Endothelial cell of umbilical vein (primary cell): ENCODE measurements at regions of chr6 and their contacts with region 1.

Region 1: DNA sequence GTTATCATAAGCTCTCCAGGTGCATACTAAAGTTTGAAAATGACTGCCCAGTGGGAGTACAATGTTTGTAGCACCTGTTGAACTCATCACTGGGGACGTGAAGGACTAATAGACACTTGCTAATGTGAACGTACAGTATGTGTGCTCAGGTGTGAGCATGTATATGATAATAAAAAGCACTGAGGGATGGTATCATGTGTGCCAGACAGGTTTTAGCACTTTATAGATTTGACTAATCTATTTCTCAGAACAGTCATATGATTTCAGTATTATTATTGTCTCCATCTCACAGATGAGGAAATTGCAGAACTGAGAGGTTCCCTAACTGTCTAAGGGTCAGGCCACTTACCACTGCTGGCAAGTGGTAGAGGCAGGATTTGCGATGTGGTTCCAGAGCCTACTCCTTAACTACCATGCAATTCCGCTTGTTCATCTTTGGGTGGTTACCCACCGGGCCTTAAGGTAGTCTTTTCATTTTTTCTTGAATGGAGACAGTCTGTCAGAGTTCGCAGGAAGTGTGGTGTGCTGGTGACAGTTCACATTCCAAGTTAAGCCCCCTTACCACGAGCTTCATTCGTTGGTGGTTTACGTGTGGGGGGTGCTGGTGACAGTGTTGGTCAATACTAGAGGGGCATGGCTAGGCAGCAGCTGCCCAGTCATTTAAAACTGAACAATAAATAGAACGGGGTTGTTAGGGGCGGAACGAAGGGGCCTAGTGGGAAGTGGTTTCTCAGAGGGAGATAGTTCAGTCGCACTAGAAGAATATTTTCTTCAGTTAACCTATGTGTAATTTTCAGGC is 46.8 kb downstream of the RREB1 start:
- DNase-seq: no peak
- H3K4me3 ChIP-seq: no peak overlapping the region
- H3K27ac ChIP-seq: no peak overlapping the region
- H3K4me1 ChIP-seq: no peaks in the 10 kb centered on the region
- H3K27me3 ChIP-seq: no peaks in the 10 kb centered on the region
- CTCF ChIP-seq: no peak
- POLR2A ChIP-seq: no peak

Region 2: GRCh38 chr6:6942831-6943230 is 211.7 kb before region 1 on chr6:
- CTCF ChIA-PET with region 1: no interaction called
- POLR2A ChIA-PET with region 1: no interaction called
- dilution Hi-C with region 1: no loop called
- intact Hi-C with region 1: no loop called
- DNase-seq: no peak
- H3K4me3 ChIP-seq: no peak overlapping the region
- H3K27ac ChIP-seq: no peak overlapping the region
- H3K4me1 ChIP-seq: no peaks in the 10 kb centered on the region
- H3K27me3 ChIP-seq: no peaks in the 10 kb centered on the region
- CTCF ChIP-seq: no peak
- POLR2A ChIP-seq: no peak

Region 3: GRCh38 chr6:7166410-7167305 is 12.1 kb after region 1 on chr6:
- CTCF ChIA-PET with region 1: interaction called, 11 read pairs
- POLR2A ChIA-PET with region 1: no interaction called
- dilution Hi-C with region 1: no loop called
- intact Hi-C with region 1: loop called (anchors 2 kb)
- DNase-seq: no peak
- H3K4me3 ChIP-seq: no peak overlapping the region
- H3K27ac ChIP-seq: no peak overlapping the region
- H3K4me1 ChIP-seq: peaks cover 9% of the 10 kb centered on the region
- H3K27me3 ChIP-seq: no peaks in the 10 kb centered on the region
- CTCF ChIP-seq: no peak
- POLR2A ChIP-seq: no peak

Region 4: DNA sequence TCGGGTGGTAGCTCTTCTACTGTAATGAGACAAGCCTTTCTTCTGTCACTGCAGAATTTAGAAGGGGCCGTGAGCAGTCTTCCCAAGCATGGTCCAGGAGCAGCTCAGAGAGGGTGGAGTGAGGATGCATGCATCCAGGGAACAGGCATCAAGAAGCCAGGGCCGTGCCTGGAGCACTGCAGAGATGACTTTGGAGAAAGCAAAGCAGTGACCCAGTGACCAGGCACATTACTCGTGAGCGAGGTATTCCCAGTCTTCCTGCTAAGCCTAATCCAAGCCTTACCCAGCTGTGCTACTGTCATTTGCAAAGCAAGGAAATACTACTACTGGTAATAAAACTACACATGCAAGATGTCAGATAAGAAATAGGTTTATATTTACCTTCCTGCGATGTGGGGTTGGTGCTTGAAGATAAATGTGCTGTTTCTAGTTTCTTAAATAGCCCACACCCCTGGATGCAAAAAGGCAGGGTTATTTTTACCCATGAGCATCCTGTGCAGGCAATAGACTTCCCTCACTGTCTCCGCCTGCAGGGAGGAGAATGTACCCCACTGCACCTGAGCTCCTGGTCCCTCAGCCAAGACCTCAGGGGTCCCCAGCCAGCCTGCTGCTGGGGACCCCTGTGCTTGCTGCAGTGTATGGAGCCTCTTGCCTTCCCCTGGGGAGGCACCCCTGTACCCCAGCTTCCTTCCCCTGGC is 95.6 kb after region 1 on chr6:
- CTCF ChIA-PET with region 1: no interaction called
- POLR2A ChIA-PET with region 1: no interaction called
- dilution Hi-C with region 1: no loop called
- intact Hi-C with region 1: no loop called
- DNase-seq: no peak
- H3K4me3 ChIP-seq: no peak overlapping the region
- H3K27ac ChIP-seq: no peak overlapping the region
- H3K4me1 ChIP-seq: no peaks in the 10 kb centered on the region
- H3K27me3 ChIP-seq: no peaks in the 10 kb centered on the region
- CTCF ChIP-seq: no peak
- POLR2A ChIP-seq: no peak

Region 5: DNA sequence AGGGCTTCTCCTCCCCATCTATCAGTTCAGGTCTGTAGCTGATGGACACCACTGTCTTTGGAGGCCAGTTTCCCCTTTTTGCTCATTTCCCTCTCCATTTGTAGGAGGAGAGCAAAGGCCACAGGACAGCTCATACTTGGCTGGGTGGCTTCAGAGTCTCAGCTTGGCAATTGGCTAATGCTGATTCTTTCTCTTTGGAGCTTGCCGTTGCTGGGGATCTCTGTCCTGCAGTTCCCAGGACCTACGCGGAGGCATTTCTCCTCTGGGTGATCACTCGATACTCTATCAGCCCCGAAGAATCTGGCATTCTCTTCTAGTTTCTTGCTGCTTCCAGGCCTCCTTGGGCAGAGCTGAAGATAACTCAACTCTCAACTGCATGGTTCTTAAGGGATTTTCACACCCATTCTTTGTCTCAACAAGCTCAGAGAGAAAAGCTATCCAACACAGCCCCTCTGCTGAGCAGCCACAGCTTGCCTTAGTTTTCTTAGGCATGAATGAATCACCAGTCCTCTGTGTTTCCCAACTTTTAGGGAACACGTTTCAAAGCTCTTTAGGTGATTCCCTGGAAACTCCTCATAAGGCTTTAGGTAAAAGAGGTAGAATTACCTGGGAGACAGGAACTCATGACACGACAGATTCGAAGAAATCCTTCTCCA is 177.7 kb after region 1 on chr6:
- CTCF ChIA-PET with region 1: no interaction called
- POLR2A ChIA-PET with region 1: no interaction called
- dilution Hi-C with region 1: no loop called
- intact Hi-C with region 1: no loop called
- DNase-seq: no peak
- H3K4me3 ChIP-seq: no peak overlapping the region
- H3K27ac ChIP-seq: no peak overlapping the region
- H3K4me1 ChIP-seq: no peaks in the 10 kb centered on the region
- H3K27me3 ChIP-seq: peaks cover 4 to 10% of the 10 kb centered on the region in 2 experiments
- CTCF ChIP-seq: no peak
- POLR2A ChIP-seq: no peak